ENCODE measurements at regions of chr10 and their contacts with region 1.

Region 1: GRCh38 chr10:91643700-91644099 is 10.8 kb upstream of the PPP1R3C start:
- DNase-seq: peak in 1 of 2 experiments; percentile 66
- ATAC-seq: peak; percentile 68 to 96; a peak in 5 of 6 replicates
- H3K4me3 ChIP-seq: no peak overlapping the region
- H3K27ac ChIP-seq: peak overlapping the region; percentile 60 to 66; a peak in 4 of 6 replicates
- H3K4me1 ChIP-seq: peaks cover 21% of the 10 kb centered on the region
- CTCF ChIP-seq: peak; percentile 40
- EP300 ChIP-seq: no peak
- POLR2A ChIP-seq: no peak
- RAD21 ChIP-seq: peak; percentile 50 to 72; a peak in 4 of 5 replicates

Region 2: DNA sequence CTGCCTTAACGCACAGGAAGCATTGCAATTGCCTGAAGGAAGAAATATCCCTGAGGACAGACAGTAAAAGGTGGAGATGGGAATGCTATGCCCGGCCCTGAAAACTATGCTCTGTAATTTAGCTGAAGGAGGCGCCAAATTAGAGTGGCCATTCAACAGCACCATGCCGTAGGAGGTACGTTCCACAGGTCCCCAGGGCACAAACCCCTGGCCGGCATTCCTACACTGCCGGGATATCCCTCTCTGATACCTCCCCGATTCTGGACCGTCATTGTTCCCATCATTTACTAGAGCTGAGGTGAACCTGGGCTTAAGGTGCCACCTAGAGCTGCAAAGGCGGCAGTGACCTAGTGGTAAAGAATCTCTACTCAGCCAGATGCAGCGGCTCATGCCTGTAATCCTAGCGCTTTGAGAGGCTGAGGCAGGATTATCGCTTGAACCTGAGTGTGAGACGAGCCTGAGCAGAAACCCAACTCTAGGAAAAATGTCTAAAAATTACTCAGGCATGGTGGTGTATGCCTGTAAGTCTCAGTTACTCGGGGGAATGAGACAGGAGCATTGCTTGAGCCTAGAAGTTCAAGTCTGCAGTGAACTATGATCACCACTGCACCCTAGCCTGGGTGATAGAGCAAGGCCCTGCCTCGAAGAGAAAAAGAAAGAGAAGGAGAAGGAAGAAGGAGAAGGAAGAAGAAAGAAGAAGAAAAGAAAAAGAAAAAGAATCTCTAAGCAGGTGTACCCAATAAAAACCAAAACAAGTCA is 101.6 kb after region 1 on chr10:
- CTCF ChIA-PET with region 1: interaction called, 24 read pairs
- POLR2A ChIA-PET with region 1: no interaction called
- DNase-seq: peak; percentile 22 to 72
- ATAC-seq: peak; percentile 99 to 100
- H3K4me3 ChIP-seq: peak overlapping the region; percentile 28; the same call in 2 of the 3 replicates
- H3K27ac ChIP-seq: peak overlapping the region; percentile 43 to 61; a peak in 5 of 6 replicates
- H3K4me1 ChIP-seq: peaks cover 5% of the 10 kb centered on the region; the same call in 1 of the 3 replicates
- CTCF ChIP-seq: peak; percentile 65
- EP300 ChIP-seq: no peak
- POLR2A ChIP-seq: no peak
- RAD21 ChIP-seq: peak; percentile 88 to 90